ENCODE measurements at regions of chr7 and their contacts with region 1.

Region 1: GRCh38 chr7:137626469-137627067 is 220.2 kb downstream of the DGKI start:
- DNase-seq: peak; percentile 42 to 69 (median 60)
- H3K4me3 ChIP-seq: no peak overlapping the region
- H3K27ac ChIP-seq: no peak overlapping the region
- H3K4me1 ChIP-seq: peaks cover 0 to 2% (median 0%) of the 10 kb centered on the region in 4 experiments
- H3K27me3 ChIP-seq: peaks cover 0 to 6% (median 0%) of the 10 kb centered on the region in 5 experiments

Region 2: GRCh38 chr7:137606061-137606674 is 20.4 kb before region 1 on chr7:
- CTCF ChIA-PET with region 1: interaction called, 35 read pairs
- POLR2A ChIA-PET with region 1: no interaction called
- DNase-seq: peak; percentile 56 to 77 (median 72)
- H3K4me3 ChIP-seq: no peak overlapping the region
- H3K27ac ChIP-seq: no peak overlapping the region
- H3K4me1 ChIP-seq: no peaks in the 10 kb centered on the region
- H3K27me3 ChIP-seq: peaks cover 0 to 7% (median 2%) of the 10 kb centered on the region in 5 experiments